ENCODE measurements at regions of chr4 and their contacts with region 1.

Region 1: GRCh38 chr4:184417802-184418511 is 56.4 kb downstream of the IRF2 start:
- DNase-seq: peak; percentile 78
- ATAC-seq: peak; percentile 72
- H3K4me3 ChIP-seq: no peak overlapping the region
- H3K27ac ChIP-seq: peak overlapping the region; percentile 90
- H3K4me1 ChIP-seq: peaks cover 64% of the 10 kb centered on the region
- H3K27me3 ChIP-seq: no peaks in the 10 kb centered on the region
- CTCF ChIP-seq: no peak
- EP300 ChIP-seq: peak in 1 of 2 experiments; percentile 75; a peak in 1 of 4 replicates
- POLR2A ChIP-seq: 0 out of 2 replicates have a peak, but pooled peaks have one; percentile 23
- RAD21 ChIP-seq: no peak

Region 2: GRCh38 chr4:184329659-184330400 is 88.1 kb before region 1 on chr4:
- CTCF ChIA-PET with region 1: interaction called, 5 read pairs
- POLR2A ChIA-PET with region 1: interaction called, 4 read pairs
- RAD21 ChIA-PET with region 1: interaction called, 4 read pairs
- SMC1A ChIA-PET with region 1: interaction called, 10 read pairs
- in situ Hi-C with region 1: no loop called
- intact Hi-C with region 1: no loop called
- DNase-seq: peak; percentile 90
- ATAC-seq: peak; percentile 81
- H3K4me3 ChIP-seq: no peak overlapping the region
- H3K27ac ChIP-seq: peak overlapping the region; percentile 90
- H3K4me1 ChIP-seq: peaks cover 44% of the 10 kb centered on the region
- H3K27me3 ChIP-seq: no peaks in the 10 kb centered on the region
- CTCF ChIP-seq: no peak; a peak in 2 of 6 replicates
- EP300 ChIP-seq: peak; percentile 98 to 100
- POLR2A ChIP-seq: peak; percentile 53; the same call in 1 of the 2 replicates
- RAD21 ChIP-seq: peak; percentile 28; the same call in 1 of the 2 replicates

Region 3: GRCh38 chr4:184349283-184350039 is 68.5 kb before region 1 on chr4:
- CTCF ChIA-PET with region 1: interaction called, 11 read pairs
- POLR2A ChIA-PET with region 1: interaction called, 31 read pairs
- RAD21 ChIA-PET with region 1: interaction called, 51 read pairs
- SMC1A ChIA-PET with region 1: interaction called, 48 read pairs
- in situ Hi-C with region 1: no loop called
- intact Hi-C with region 1: loop called (anchors 1 kb)
- DNase-seq: no peak
- ATAC-seq: no peak
- H3K4me3 ChIP-seq: peak overlapping the region; percentile 89
- H3K27ac ChIP-seq: peak overlapping the region; percentile 99
- H3K4me1 ChIP-seq: peaks cover 50% of the 10 kb centered on the region
- H3K27me3 ChIP-seq: no peaks in the 10 kb centered on the region
- CTCF ChIP-seq: no peak
- EP300 ChIP-seq: no peak
- POLR2A ChIP-seq: no peak
- RAD21 ChIP-seq: no peak

Region 4: GRCh38 chr4:184384056-184384809 is 33.7 kb before region 1 on chr4:
- CTCF ChIA-PET with region 1: interaction called, 6 read pairs
- POLR2A ChIA-PET with region 1: interaction called, 9 read pairs
- RAD21 ChIA-PET with region 1: interaction called, 28 read pairs
- SMC1A ChIA-PET with region 1: interaction called, 38 read pairs
- in situ Hi-C with region 1: no loop called
- intact Hi-C with region 1: loop called (anchors 1 kb)
- DNase-seq: peak; percentile 92
- ATAC-seq: peak; percentile 77
- H3K4me3 ChIP-seq: peak overlapping the region; percentile 59; the same call in 1 of the 2 replicates
- H3K27ac ChIP-seq: peak overlapping the region; percentile 88
- H3K4me1 ChIP-seq: peaks cover 68% of the 10 kb centered on the region
- H3K27me3 ChIP-seq: no peaks in the 10 kb centered on the region
- CTCF ChIP-seq: no peak
- EP300 ChIP-seq: peak; percentile 76 to 86
- POLR2A ChIP-seq: peak; percentile 70
- RAD21 ChIP-seq: no peak

Region 5: DNA sequence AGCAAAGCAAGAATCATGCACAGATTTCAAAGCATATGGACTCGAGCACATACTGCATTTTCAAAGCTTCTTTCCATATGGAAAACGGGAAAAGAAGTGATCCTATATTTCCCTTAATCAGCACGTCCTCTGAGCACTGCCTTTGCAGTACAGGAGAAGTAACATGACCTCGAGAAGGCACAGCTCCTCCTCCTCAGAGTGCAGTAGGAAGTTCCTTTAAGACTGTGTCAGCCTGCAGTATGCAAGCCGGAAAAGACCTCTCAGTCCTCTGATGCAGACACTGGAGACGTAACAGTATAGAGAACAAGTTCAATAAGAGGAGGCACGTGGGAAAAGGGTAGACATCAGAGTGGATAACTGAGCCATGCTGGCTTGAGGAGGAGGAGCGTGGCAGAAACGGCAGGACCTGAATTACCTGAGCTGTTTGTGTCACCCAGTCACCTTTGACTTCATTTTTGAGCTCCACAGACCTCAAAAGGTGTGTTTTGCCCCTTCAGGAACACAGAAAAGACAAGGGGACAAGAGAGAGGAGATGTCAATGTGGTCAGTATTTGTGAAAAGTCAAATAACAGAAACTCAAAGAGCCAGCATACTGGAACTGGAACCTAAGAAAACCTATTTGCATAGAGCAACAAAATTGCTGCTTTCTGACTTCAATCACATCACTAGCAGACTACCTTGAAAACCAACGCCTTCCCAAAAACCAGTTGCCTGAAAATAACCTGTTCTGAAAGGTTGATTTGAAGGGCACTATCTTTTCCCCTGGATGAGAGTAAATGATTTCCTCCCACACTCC is 35.6 kb after region 1 on chr4:
- CTCF ChIA-PET with region 1: interaction called, 3 read pairs
- POLR2A ChIA-PET with region 1: interaction called, 19 read pairs
- RAD21 ChIA-PET with region 1: interaction called, 8 read pairs
- SMC1A ChIA-PET with region 1: interaction called, 7 read pairs
- in situ Hi-C with region 1: no loop called
- intact Hi-C with region 1: no loop called
- DNase-seq: no peak
- ATAC-seq: peak; percentile 83
- H3K4me3 ChIP-seq: peak overlapping the region; percentile 6; the same call in 1 of the 2 replicates
- H3K27ac ChIP-seq: peak overlapping the region; percentile 40
- H3K4me1 ChIP-seq: peaks cover 50% of the 10 kb centered on the region
- H3K27me3 ChIP-seq: no peaks in the 10 kb centered on the region
- CTCF ChIP-seq: no peak
- EP300 ChIP-seq: no peak
- POLR2A ChIP-seq: no peak
- RAD21 ChIP-seq: no peak

Region 6: DNA sequence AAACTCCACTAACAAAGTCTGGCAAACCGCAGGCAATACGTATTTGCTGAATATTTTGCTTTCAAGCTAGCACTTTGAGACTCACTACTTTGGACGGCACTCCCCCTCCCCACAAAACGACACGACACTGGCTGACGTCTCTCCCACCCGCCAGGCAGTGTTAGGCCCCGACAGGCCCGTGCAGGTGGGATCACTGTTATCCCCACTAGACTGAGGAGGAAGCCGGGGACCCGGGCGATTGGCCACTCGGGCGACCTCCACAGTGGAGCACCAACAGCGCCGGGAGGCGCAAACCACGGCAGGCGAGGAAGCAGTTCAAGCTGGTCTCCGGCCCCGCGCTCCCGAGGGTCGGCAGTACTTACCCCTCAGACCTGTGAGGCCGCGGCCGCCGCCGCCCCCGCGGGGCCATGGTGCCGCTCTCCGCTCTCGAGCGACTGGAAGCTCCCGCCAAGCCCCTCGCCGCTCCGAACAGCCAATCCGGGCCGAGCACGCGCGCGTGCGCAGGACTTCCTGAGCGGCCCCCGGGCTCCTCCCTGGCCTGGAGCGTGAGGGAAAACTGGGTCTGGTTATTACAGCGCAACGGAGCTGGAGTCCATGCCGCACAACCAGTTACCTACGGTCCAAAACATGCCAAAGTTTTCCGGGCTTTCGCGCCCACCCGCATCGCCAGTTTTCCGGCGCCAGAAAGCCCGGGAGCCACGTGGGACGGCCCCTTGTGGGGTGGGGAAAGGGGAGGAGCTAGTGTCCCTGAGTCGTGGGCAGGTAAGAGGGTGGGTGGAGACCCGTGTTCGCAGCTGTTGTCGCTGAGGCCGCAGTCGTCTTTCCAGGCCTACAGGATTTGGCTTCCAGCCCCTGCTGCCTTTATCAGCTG is 315.9 kb after region 1 on chr4 and contains the start of gene CENPU:
- CTCF ChIA-PET with region 1: no interaction called
- POLR2A ChIA-PET with region 1: no interaction called
- RAD21 ChIA-PET with region 1: no interaction called
- SMC1A ChIA-PET with region 1: no interaction called
- in situ Hi-C with region 1: no loop called
- intact Hi-C with region 1: loop called (anchors 5 kb)
- DNase-seq: peak; percentile 94
- ATAC-seq: peak; percentile 93
- H3K4me3 ChIP-seq: peak within 1 kb of the TSS; percentile 91
- H3K27ac ChIP-seq: peak within 1 kb of the TSS; percentile 81
- H3K4me1 ChIP-seq: peaks cover 9% of the 10 kb centered on the region
- H3K27me3 ChIP-seq: no peaks in the 10 kb centered on the region
- CTCF ChIP-seq: no peak
- EP300 ChIP-seq: no peak
- POLR2A ChIP-seq: peak; percentile 91
- RAD21 ChIP-seq: 0 out of 2 replicates have a peak, but pooled peaks have one; percentile 22
- polyA plus RNA-seq, gene CENPU: 26.6 to 46.5 TPM

Measured in GM12878 (cell line).